ENCODE measurements at regions of chr13 and their contacts with region 1.

Region 1: GRCh38 chr13:39602614-39603366 is at the start of gene LHFPL6:
- DNase-seq: peak; percentile 84
- H3K4me3 ChIP-seq: peak within 1 kb of the TSS; percentile 90 to 92 (median 92)
- H3K27ac ChIP-seq: peak within 1 kb of the TSS; percentile 62
- H3K4me1 ChIP-seq: peaks cover 23% of the 10 kb centered on the region
- H3K27me3 ChIP-seq: no peaks in the 10 kb centered on the region
- CTCF ChIP-seq: peak; percentile 35 to 58
- total RNA-seq, gene LHFPL6: 29.2 to 33.1 TPM

Region 2: GRCh38 chr13:39037880-39038568 is 564.8 kb before region 1 on chr13 and contains the starts of genes NHLRC3 and PROSER1:
- CTCF ChIA-PET with region 1: no interaction called
- dilution Hi-C with region 1: no loop called
- in situ Hi-C with region 1: loop called in 1 of 2 experiments (anchors 25 kb)
- intact Hi-C with region 1: loop called (anchors 5 kb)
- DNase-seq: peak; percentile 91
- H3K4me3 ChIP-seq: peak within 1 kb of the TSS; percentile 74 to 98 (median 77)
- H3K27ac ChIP-seq: peak within 1 kb of the TSS; percentile 79
- H3K4me1 ChIP-seq: peaks cover 11% of the 10 kb centered on the region
- H3K27me3 ChIP-seq: no peaks in the 10 kb centered on the region
- CTCF ChIP-seq: no peak
- total RNA-seq, gene NHLRC3: 15.9 to 30.7 TPM
- total RNA-seq, gene PROSER1: 22.3 to 52.4 TPM

Region 3: DNA sequence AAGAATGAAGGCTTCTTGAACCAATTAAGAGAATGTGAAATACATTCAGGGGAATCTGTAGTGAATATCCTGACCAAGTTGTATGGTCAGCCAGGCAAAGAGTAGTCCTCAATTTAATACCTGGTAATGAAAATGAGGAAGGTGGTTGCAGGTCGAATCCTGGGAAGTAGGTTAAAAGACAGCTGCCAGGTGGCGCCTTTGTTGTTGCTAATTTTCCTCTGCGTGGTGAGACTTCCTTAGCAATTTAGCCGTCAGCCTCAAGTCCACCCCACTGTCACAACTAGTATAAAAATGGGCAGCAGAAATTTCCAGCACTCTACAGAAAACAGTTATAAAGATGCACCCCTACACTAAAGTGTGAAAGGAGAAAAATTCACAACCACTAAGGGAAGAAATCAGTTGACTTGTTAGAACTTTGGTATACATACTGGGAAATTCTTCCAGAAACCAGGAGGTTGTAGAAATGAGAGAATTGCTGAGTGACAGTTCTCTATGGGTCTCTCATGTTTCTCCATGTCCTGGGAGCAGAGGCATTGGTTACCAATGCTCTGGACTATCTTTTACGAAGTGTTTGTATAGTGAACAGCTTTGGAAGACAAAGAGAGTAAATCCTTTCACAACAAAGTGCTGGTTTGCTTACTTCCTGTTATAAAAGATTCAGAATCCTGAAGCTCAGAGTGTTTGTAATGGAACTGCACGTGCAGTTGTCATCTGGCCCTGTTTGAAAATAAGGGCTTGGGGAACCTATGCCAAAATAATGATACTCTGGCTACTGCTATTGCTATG is 328.6 kb before region 1 on chr13:
- CTCF ChIA-PET with region 1: no interaction called
- dilution Hi-C with region 1: no loop called
- in situ Hi-C with region 1: no loop called
- intact Hi-C with region 1: loop called (anchors 1 kb)
- DNase-seq: no peak
- H3K4me3 ChIP-seq: no peak overlapping the region
- H3K27ac ChIP-seq: no peak overlapping the region
- H3K4me1 ChIP-seq: no peaks in the 10 kb centered on the region
- H3K27me3 ChIP-seq: peaks cover 3% of the 10 kb centered on the region
- CTCF ChIP-seq: peak; percentile 15 to 56

Region 4: GRCh38 chr13:39406688-39407087 is 196.1 kb before region 1 on chr13:
- CTCF ChIA-PET with region 1: interaction called, 3 read pairs
- dilution Hi-C with region 1: no loop called
- in situ Hi-C with region 1: loop called (anchors 10 to 25 kb)
- intact Hi-C with region 1: no loop called
- DNase-seq: peak; percentile 92
- H3K4me3 ChIP-seq: no peak overlapping the region
- H3K27ac ChIP-seq: peak overlapping the region; percentile 37
- H3K4me1 ChIP-seq: peaks cover 5% of the 10 kb centered on the region
- H3K27me3 ChIP-seq: no peaks in the 10 kb centered on the region
- CTCF ChIP-seq: peak; percentile 35 to 53

Region 5: GRCh38 chr13:39501702-39502324 is 101.0 kb before region 1 on chr13:
- CTCF ChIA-PET with region 1: no interaction called
- dilution Hi-C with region 1: no loop called
- in situ Hi-C with region 1: no loop called
- intact Hi-C with region 1: loop called (anchors 1 kb)
- DNase-seq: no peak
- H3K4me3 ChIP-seq: no peak overlapping the region
- H3K27ac ChIP-seq: no peak overlapping the region
- H3K4me1 ChIP-seq: peaks cover 9% of the 10 kb centered on the region
- H3K27me3 ChIP-seq: no peaks in the 10 kb centered on the region
- CTCF ChIP-seq: no peak

Region 6: GRCh38 chr13:39565036-39565949 is 37.5 kb before region 1 on chr13:
- CTCF ChIA-PET with region 1: no interaction called
- dilution Hi-C with region 1: no loop called
- in situ Hi-C with region 1: no loop called
- intact Hi-C with region 1: loop called (anchors 2 kb)
- DNase-seq: peak; percentile 87
- H3K4me3 ChIP-seq: peak overlapping the region; percentile 11 to 25 (median 14)
- H3K27ac ChIP-seq: peak overlapping the region; percentile 88
- H3K4me1 ChIP-seq: peaks cover 49% of the 10 kb centered on the region
- H3K27me3 ChIP-seq: no peaks in the 10 kb centered on the region
- CTCF ChIP-seq: no peak

Measured in mammary epithelial cell (primary cell).